ENCODE measurements at regions of chr14 and their contacts with region 1.

Region 1: GRCh38 chr14:60212503-60213371 is 36.3 kb upstream of the PPM1A start:
- DNase-seq: no peak
- ATAC-seq: no peak

Region 2: GRCh38 chr14:60035177-60035576 is 177.6 kb before region 1 on chr14:
- intact Hi-C with region 1: no loop called
- DNase-seq: no peak
- ATAC-seq: no peak

Region 3: DNA sequence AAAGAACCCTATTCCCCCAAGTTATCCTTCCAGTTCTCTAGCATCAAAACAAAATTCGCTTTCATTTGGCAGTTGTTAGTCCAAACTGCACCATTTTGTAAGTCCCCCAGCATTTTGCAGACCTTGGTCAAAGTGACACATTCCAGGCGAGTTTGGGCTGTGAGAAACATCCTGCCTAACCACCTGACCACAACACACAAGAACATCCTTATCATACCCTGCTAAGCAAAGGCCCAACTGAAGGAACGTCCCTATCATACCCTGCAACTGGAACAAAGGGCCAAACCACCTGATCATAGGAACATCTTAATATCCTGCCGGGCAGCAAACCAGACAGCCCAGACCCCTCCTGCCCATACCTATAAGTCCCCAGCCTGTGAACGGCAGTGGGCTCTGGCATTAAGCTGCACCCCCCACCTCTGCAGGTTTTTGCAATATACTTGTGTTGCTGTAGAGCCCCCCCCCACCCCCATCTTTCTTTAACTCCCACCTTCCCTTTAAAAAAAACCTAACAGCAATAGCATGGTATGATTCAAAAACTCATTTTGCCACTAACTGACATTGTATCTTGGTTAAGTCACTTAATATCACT is 118.3 kb before region 1 on chr14:
- intact Hi-C with region 1: no loop called
- DNase-seq: no peak
- ATAC-seq: no peak

Region 4: GRCh38 chr14:60309867-60310552 is 97.3 kb after region 1 on chr14:
- intact Hi-C with region 1: loop called (anchors 10 kb)
- DNase-seq: no peak
- ATAC-seq: no peak

Region 5: GRCh38 chr14:60327447-60328331 is 115.0 kb after region 1 on chr14:
- intact Hi-C with region 1: loop called (anchors 5 kb)
- DNase-seq: peak; percentile 67
- ATAC-seq: peak; percentile 69